Posterior vena cava (tissue), 2 donors: ENCODE measurements at regions of chr4 and their contacts with region 1.

Region 1: GRCh38 chr4:6783053-6783981 is 790 bp downstream of the KIAA0232 start:
- DNase-seq: peak; percentile 97

Region 2: GRCh38 chr4:6811165-6811564 is 27.8 kb after region 1 on chr4:
- intact Hi-C with region 1: no loop called
- DNase-seq: no peak

Region 3: DNA sequence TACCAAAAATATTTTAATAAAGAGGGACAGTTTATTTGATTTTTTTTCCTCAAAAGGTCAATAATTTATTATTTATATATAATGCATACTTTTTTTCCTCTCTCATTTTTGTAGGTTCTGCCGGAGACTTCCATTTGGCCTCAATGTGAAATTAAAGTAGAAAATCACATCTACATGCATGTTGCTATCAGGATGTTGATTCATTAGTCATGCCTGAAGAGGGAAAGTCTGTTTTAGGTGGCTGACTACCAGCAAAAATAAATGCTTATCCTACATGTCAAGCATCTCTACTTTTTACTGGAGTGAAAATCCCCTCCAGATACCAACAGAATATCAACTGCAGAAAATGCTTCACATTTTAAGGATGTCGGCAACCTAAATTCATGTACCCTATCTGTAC is 40.8 kb after region 1 on chr4:
- intact Hi-C with region 1: no loop called
- DNase-seq: no peak

Region 4: GRCh38 chr4:6840062-6840976 is 57.0 kb after region 1 on chr4:
- intact Hi-C with region 1: loop called in 1 of 2 experiments (anchors 10 kb)
- DNase-seq: no peak